T-cell (primary cell): ENCODE measurements at regions of chr2 and their contacts with region 1.

Region 1: DNA sequence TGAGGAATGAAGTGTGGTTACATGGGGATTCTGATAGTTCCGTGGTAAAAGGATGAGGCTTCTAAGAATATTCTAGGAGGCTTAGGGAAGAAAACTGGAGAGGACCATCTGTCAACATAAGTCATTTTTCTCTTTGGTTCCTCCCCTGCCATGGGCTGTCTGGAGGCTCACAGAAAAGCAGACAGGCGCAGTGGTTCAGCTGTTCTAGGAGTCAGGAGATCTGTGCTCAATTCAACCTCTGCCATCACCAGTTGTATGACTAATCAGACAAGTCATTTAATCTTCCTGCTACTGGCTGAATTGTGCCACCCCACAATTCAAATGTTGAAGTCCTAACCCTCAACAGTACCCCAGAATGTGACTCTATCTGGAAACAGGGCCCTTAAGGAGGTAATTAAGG is 36.4 kb downstream of the ADAM17 start:
- DNase-seq: no peak
- ATAC-seq: no peak
- H3K4me3 ChIP-seq: no peak overlapping the region
- H3K4me3 Mint-ChIP-seq: no peak overlapping the region
- H3K27ac ChIP-seq: no peak overlapping the region
- H3K27ac Mint-ChIP-seq: peak overlapping the region in 1 of 2 donors; percentile 27
- H3K4me1 ChIP-seq: no peaks in the 10 kb centered on the region
- H3K4me1 Mint-ChIP-seq: peaks cover 0 to 1% (median 0%) of the 10 kb centered on the region in 3 donors
- H3K27me3 ChIP-seq: no peaks in the 10 kb centered on the region
- H3K27me3 Mint-ChIP-seq: no peaks in the 10 kb centered on the region

Region 2: GRCh38 chr2:9497017-9497416 is 22.2 kb before region 1 on chr2:
- CTCF ChIA-PET with region 1: no interaction called
- POLR2A ChIA-PET with region 1: no interaction called
- DNase-seq: no peak
- ATAC-seq: peak in 1 of 4 experiments; percentile 27
- H3K4me3 ChIP-seq: no peak overlapping the region
- H3K4me3 Mint-ChIP-seq: no peak overlapping the region
- H3K27ac ChIP-seq: no peak overlapping the region
- H3K27ac Mint-ChIP-seq: peak overlapping the region; percentile 28 to 49
- H3K4me1 ChIP-seq: no peaks in the 10 kb centered on the region
- H3K4me1 Mint-ChIP-seq: peaks cover 3 to 8% (median 4%) of the 10 kb centered on the region in 3 donors
- H3K27me3 ChIP-seq: no peaks in the 10 kb centered on the region
- H3K27me3 Mint-ChIP-seq: no peaks in the 10 kb centered on the region

Region 3: GRCh38 chr2:10846110-10846861 is 1327.0 kb after region 1 on chr2:
- CTCF ChIA-PET with region 1: no interaction called
- POLR2A ChIA-PET with region 1: interaction called in 1 of 2 experiments, 12 read pairs
- DNase-seq: no peak
- ATAC-seq: no peak
- H3K4me3 ChIP-seq: no peak overlapping the region
- H3K4me3 Mint-ChIP-seq: no peak overlapping the region
- H3K27ac ChIP-seq: no peak overlapping the region
- H3K27ac Mint-ChIP-seq: no peak overlapping the region
- H3K4me1 ChIP-seq: no peaks in the 10 kb centered on the region
- H3K4me1 Mint-ChIP-seq: no peaks in the 10 kb centered on the region
- H3K27me3 ChIP-seq: peaks cover 0 to 34% of the 10 kb centered on the region in 2 experiments
- H3K27me3 Mint-ChIP-seq: peaks cover 11 to 18% of the 10 kb centered on the region in 2 donors